Mammary epithelial cell (primary cell): ENCODE measurements at regions of chr13 and their contacts with region 1.

Region 1: DNA sequence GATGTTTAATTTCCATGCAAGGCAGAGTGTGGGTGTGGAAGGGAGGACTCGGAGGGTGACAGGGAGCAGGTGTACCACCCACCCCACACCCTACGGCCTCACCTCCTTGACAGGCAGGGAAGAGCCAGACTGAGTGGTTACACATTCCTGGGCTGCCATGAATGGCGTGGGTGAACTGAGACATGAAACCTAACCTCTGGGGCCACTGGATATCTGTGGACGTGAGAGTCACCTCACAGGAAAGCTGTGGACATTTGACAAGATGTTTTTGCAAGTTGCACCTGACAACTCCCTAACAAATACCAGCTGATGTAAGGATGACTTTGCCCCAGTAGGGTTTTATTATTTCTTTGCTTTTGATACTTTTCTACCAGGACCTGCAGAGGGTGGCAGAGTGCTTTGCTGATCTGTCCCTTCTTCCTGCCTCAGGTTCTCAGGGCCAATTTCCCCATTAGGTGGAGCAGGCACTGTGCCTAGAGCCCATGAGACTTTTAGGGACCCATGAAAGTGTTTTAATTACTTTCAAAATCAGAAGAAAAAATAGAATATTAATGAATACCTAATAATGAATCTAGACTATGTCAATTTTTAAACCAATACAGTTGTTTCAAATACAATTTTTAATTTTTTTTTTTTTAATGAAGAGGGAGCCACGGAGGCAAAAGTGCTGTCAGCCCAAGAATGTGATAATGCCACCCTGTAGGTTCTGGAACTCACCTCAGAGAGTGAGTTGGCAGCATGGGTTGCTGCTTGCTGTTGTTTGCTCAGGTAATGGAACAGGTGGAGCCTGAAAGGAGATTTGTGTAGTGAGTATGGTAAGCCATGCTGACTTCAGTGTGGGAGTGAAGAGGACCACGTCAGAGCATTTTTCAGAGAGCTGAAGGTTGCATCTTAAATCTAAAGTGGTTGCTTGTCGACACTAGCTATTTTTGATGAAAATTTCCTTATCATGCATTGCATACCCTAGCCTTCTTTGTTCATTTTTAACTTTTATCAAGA is 58.0 kb upstream of the CYSLTR2 start:
- DNase-seq: peak; percentile 68
- H3K4me3 ChIP-seq: no peak overlapping the region
- H3K27ac ChIP-seq: no peak overlapping the region
- H3K4me1 ChIP-seq: peaks cover 3% of the 10 kb centered on the region
- H3K27me3 ChIP-seq: no peaks in the 10 kb centered on the region
- CTCF ChIP-seq: peak; percentile 49 to 90

Region 2: GRCh38 chr13:48647630-48648029 is 51.9 kb after region 1 on chr13:
- CTCF ChIA-PET with region 1: no interaction called
- dilution Hi-C with region 1: no loop called
- in situ Hi-C with region 1: no loop called
- intact Hi-C with region 1: loop called (anchors 5 kb)
- DNase-seq: no peak
- H3K4me3 ChIP-seq: no peak overlapping the region
- H3K27ac ChIP-seq: no peak overlapping the region
- H3K4me1 ChIP-seq: no peaks in the 10 kb centered on the region
- H3K27me3 ChIP-seq: peaks cover 3% of the 10 kb centered on the region
- CTCF ChIP-seq: peak; percentile 7 to 18

Region 3: DNA sequence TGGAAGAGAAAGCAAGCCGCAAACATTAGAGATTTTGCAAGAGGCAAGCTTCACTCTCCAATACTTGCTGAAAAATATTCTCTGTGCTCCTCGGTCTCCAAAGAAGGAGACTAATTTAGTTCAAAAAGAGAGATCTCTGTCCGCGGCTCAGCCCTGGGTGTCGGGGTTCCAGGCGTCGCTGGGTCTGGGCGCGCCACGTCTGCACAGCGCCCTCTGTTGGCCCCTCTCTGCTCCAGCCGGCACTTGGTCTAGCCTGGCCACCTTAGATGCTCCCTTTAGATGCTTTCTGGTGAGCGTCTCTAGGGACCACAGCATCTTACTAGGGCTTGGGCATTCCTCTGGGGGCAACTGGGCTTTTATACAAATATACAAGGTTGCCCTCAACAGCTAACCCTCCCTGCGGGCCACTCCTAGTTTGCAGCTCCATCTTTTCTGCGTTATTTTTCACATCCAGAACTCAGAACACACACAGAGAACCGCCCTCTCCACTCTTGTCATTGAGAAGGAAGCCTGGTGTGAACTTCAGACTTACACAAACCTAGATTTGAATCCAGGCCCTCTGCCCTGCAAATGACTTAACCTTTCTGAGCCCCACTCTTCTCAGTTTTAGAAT is 136.3 kb after region 1 on chr13:
- CTCF ChIA-PET with region 1: interaction called, 4 read pairs
- dilution Hi-C with region 1: no loop called
- in situ Hi-C with region 1: no loop called
- intact Hi-C with region 1: loop called (anchors 1 kb)
- DNase-seq: peak; percentile 12
- H3K4me3 ChIP-seq: no peak overlapping the region
- H3K27ac ChIP-seq: no peak overlapping the region
- H3K4me1 ChIP-seq: no peaks in the 10 kb centered on the region
- H3K27me3 ChIP-seq: no peaks in the 10 kb centered on the region
- CTCF ChIP-seq: peak; percentile 55 to 62

Region 4: DNA sequence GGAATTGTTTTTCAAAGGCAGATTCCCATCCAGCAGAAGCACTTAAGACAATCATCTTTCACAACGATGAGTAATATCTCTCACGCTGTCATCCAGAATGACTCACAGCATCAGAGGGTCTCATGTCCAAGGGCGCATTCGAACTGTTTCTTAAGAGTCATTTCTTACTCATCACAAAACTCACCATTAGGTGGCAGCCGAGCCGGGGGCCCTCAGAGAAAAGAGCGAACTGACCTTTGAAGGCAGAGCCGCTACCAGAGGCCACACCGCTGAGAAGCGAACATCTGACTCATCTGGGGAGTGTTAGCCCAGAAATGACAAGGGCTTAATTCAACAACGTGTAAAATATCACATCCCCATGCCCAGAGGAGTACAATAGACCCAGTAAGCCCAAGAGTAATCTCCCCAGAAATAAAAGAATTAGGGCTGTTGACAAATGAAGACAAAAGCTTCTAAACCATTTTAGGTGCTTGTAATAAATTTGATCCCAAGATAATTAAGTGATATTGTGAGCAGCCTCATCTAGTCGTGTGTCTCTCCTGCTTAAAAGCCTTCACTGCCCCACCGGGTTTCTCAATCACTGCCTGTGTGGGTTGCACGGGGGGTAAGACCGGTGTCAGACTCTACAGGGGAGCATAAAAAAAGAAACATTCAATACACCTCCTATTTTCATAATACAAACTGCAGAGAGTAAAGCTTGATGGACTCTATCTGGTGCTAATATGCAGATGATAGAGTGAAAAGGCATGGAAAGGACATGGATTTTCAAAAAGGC is 154.2 kb after region 1 on chr13:
- CTCF ChIA-PET with region 1: no interaction called
- dilution Hi-C with region 1: no loop called
- in situ Hi-C with region 1: no loop called
- intact Hi-C with region 1: loop called (anchors 5 kb)
- DNase-seq: peak; percentile 99
- H3K4me3 ChIP-seq: no peak overlapping the region
- H3K27ac ChIP-seq: peak overlapping the region; percentile 82
- H3K4me1 ChIP-seq: peaks cover 22% of the 10 kb centered on the region
- H3K27me3 ChIP-seq: no peaks in the 10 kb centered on the region
- CTCF ChIP-seq: peak; percentile 42 to 64

Region 5: DNA sequence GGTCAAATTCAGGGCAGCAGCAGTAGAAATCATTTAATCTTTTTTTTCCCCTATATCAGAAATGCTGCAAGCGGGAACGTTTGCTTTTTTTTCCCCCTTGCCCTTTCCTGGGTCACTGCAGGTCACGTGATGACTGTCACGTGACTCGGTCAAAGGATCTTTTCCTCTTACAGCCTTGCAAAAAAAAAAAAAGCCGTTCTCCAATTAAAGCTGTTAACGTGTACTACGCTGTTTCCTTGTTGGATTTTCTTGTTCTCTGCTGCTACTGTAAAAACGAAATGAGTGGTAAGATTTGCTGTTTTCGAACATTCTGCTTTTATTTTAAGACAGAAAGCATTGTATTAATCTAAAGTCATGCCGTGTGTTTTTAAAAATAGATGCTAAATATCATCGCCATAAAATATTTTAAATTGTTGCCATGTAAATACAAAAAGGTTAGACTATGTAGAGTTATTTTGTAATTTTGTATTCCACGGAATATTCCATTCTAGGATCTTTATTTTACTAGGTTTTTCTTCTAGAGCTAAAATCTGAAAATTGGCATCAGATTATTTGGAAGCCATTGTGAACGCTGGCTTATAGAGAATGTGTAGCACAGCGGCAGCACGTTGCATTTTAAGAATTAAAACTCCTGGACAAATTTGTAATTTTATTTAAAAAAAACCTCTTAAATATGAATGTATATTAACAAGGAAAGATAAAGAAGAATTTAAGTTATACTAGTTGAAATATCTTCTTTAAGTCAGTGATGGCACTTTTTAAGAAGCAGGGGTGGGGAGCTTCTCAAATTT is 514.6 kb after region 1 on chr13:
- CTCF ChIA-PET with region 1: interaction called, 10 read pairs
- dilution Hi-C with region 1: no loop called
- in situ Hi-C with region 1: no loop called
- intact Hi-C with region 1: no loop called
- DNase-seq: peak; percentile 79
- H3K4me3 ChIP-seq: peak overlapping the region; percentile 26 to 99 (median 97)
- H3K27ac ChIP-seq: peak overlapping the region; percentile 90
- H3K4me1 ChIP-seq: peaks cover 13% of the 10 kb centered on the region
- H3K27me3 ChIP-seq: no peaks in the 10 kb centered on the region
- CTCF ChIP-seq: no peak

Region 6: GRCh38 chr13:49278211-49278610 is 682.5 kb after region 1 on chr13:
- CTCF ChIA-PET with region 1: no interaction called
- dilution Hi-C with region 1: no loop called
- in situ Hi-C with region 1: no loop called
- intact Hi-C with region 1: loop called (anchors 1 kb)
- DNase-seq: no peak
- H3K4me3 ChIP-seq: no peak overlapping the region
- H3K27ac ChIP-seq: no peak overlapping the region
- H3K4me1 ChIP-seq: no peaks in the 10 kb centered on the region
- H3K27me3 ChIP-seq: no peaks in the 10 kb centered on the region
- CTCF ChIP-seq: no peak